Left colon (tissue), 2 donors: ENCODE measurements at regions of chr2 and their contacts with region 1.

Region 1: DNA sequence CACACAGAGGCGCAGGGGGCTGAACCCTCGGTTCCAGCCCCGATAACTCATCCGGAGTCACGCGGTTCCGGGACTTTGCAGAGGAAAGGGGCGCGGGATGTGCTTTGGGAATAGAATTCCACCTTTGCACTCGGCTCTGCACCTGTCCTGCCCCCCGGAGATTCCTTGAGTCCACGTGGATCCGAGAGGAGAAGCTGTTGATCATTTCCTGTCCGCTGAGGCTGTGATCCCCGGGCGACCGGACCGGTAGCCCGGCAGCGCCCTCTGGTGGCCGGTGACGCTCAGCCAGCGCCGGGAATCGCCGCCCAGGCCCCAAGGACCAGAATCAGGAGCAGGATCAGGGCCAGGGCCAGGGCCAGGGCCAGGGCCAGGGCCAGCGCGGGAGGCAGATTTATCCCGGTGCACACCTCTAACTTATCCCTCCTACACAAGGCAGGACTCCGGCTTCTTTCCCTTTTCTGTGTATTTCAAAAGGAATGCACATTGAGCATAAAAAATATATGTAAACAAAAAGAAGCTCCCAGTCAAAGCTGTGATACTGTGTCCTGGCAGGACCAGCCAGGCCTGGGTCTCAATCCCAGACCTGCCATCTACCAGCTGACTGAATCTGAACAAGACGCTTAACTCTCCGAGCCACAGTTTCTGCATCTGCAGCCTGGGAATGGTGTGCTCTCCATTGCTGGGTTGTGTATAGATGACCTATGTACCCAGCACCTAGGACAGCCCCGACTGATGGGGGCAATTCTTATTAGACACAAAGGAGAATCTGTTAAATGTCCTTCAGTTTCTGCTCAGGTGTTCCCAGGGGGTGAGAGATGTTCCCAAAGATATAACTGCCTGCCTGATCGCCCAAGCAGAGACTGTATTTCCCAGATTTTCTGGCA is 8.5 kb upstream of the SPATA3 start:
- DNase-seq: peak; percentile 59 to 88
- ATAC-seq: peak; percentile 91

Region 2: DNA sequence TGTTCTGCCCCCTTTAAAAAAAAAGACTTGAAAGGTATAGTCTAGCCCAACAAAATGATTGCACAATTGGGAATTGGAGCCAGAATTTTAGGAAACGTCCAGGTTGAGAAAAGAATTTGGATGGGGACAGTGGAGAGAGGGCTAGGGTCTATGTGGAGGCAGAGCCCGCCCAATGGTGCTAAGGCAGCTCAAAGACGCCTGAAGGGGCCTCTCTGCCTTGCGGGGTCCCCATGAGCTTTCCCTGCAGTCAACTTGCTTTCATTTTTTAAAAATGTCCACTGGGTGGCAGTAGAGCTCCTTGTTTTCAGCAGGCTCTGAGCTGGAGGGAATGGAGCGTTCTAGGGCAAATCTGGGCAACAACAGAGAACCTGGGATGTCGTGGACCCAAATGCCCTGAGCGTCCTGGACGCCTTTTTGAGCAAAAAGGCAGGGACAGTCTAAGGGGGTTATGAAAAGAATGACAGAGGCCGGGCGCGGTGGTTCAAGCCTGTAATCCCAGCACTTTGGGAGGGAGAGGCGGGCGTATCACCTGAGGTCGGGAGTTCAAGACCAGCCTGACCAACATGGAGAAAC is 162.9 kb before region 1 on chr2:
- intact Hi-C with region 1: loop called (anchors 2 to 10 kb)
- DNase-seq: peak in 1 of 2 donors; percentile 43
- ATAC-seq: peak; percentile 65

Region 3: GRCh38 chr2:230902180-230902899 is 85.0 kb before region 1 on chr2:
- intact Hi-C with region 1: loop called in 1 of 2 experiments (anchors 10 kb)
- DNase-seq: peak; percentile 52 to 60
- ATAC-seq: peak; percentile 81